Esophagus muscularis mucosa (tissue), 4 donors: ENCODE measurements at regions of chr1 and their contacts with region 1.

Region 1: GRCh38 chr1:14915356-14916054 is 238.0 kb upstream of the TMEM51 start:
- DNase-seq: no peak
- H3K4me3 ChIP-seq: no peak overlapping the region
- H3K27ac ChIP-seq: no peak overlapping the region
- H3K4me1 ChIP-seq: no peaks in the 10 kb centered on the region
- H3K27me3 ChIP-seq: no peaks in the 10 kb centered on the region
- CTCF ChIP-seq: peak; percentile 80 to 95 (median 85)
- EP300 ChIP-seq: no peak
- POLR2A ChIP-seq: no peak

Region 2: GRCh38 chr1:14778898-14779865 is 136.3 kb before region 1 on chr1:
- intact Hi-C with region 1: loop called (anchors 10 kb)
- DNase-seq: no peak
- H3K4me3 ChIP-seq: no peak overlapping the region
- H3K27ac ChIP-seq: no peak overlapping the region
- H3K4me1 ChIP-seq: no peaks in the 10 kb centered on the region
- H3K27me3 ChIP-seq: no peaks in the 10 kb centered on the region
- CTCF ChIP-seq: peak; percentile 42 to 69 (median 47)
- EP300 ChIP-seq: no peak
- POLR2A ChIP-seq: no peak

Region 3: GRCh38 chr1:14817223-14818170 is 98.0 kb before region 1 on chr1:
- intact Hi-C with region 1: no loop called
- DNase-seq: no peak
- H3K4me3 ChIP-seq: no peak overlapping the region
- H3K27ac ChIP-seq: no peak overlapping the region
- H3K4me1 ChIP-seq: peaks cover 0 to 16% (median 12%) of the 10 kb centered on the region in 4 donors
- H3K27me3 ChIP-seq: no peaks in the 10 kb centered on the region
- CTCF ChIP-seq: no peak
- EP300 ChIP-seq: no peak
- POLR2A ChIP-seq: no peak